Activated CD4-positive, alpha-beta T cell treated with anti-CD3 and anti-CD28 coated beads for 36 hours (primary cell): ENCODE measurements at regions of chr2 and their contacts with region 1.

Region 1: DNA sequence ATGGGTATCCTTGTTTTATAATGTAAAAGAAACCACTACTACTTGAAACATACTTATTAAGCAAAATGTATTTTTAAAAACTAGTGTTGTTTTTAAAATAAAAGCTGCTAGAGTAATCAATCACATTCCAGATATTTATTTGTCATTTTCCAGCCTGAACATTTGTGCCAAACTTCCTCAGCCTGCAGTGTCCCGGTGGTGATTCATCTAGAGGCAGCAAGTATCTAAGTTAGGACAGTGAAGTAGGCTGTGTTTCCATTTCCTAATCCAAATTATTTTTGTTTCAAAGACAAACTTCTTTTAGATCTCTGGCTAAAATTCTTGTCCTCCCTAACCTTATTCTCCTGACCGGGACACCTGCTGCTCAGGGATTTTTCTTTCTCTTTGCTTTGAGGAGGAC is 12.8 kb upstream of the GCG start:
- DNase-seq: no peak
- ATAC-seq: no peak
- H3K4me3 Mint-ChIP-seq: no peak overlapping the region
- H3K27ac Mint-ChIP-seq: no peak overlapping the region
- H3K4me1 Mint-ChIP-seq: peaks cover 6% of the 10 kb centered on the region
- H3K27me3 Mint-ChIP-seq: peaks cover 26% of the 10 kb centered on the region

Region 2: GRCh38 chr2:162184821-162185446 is 20.1 kb after region 1 on chr2:
- CTCF ChIA-PET with region 1: interaction called, 3 read pairs
- POLR2A ChIA-PET with region 1: no interaction called
- intact Hi-C with region 1: loop called in 1 of 2 experiments (anchors 1 kb)
- DNase-seq: no peak
- ATAC-seq: no peak
- H3K4me3 Mint-ChIP-seq: no peak overlapping the region
- H3K27ac Mint-ChIP-seq: no peak overlapping the region
- H3K4me1 Mint-ChIP-seq: peaks cover 4% of the 10 kb centered on the region
- H3K27me3 Mint-ChIP-seq: peaks cover 4% of the 10 kb centered on the region

Region 3: DNA sequence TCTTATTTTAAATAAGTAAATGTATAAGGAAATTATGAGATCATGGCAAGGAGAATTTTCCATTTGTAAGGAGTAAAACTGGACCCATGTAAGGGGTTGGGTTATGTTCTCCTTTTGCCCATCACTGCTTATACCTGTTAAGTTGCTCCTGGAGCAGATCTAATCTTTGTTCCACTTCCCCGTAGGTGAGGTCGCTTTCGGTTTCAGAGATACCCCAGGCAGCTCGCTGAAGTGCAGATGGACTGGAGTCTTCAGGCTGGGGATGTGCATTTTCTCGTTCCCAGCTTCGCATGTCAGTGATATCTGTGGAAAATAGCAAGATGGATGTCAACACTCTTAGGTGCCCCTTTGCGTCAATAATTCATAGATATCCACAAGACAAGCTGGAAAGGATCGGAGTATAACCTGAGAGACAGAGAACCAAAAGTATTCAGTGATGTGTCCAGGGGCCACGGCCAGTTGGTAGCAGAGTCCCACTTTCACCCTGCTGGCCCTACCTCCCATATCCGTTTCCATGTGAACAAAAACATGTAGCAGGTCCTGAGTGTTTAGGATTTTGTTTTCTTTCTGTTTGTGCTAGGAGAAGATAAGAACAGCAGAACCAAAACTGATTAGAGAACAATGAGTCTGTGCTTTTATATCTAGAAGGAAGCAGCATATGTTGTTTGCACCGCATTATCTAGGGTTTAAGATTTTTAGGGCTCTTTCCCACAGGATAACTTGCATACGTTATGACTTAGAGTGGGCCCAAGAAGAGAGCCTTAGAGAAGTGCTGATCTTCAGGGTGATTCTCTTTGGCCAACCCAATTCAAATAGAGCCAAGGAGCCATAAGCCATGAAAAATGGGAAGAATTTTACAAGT is 215.1 kb after region 1 on chr2:
- CTCF ChIA-PET with region 1: no interaction called
- POLR2A ChIA-PET with region 1: no interaction called
- intact Hi-C with region 1: no loop called
- DNase-seq: no peak
- ATAC-seq: no peak
- H3K4me3 Mint-ChIP-seq: no peak overlapping the region
- H3K27ac Mint-ChIP-seq: no peak overlapping the region
- H3K4me1 Mint-ChIP-seq: no peaks in the 10 kb centered on the region
- H3K27me3 Mint-ChIP-seq: peaks cover 7% of the 10 kb centered on the region